Mammary epithelial cell (primary cell): ENCODE measurements at regions of chr15 and their contacts with region 1.

Region 1: DNA sequence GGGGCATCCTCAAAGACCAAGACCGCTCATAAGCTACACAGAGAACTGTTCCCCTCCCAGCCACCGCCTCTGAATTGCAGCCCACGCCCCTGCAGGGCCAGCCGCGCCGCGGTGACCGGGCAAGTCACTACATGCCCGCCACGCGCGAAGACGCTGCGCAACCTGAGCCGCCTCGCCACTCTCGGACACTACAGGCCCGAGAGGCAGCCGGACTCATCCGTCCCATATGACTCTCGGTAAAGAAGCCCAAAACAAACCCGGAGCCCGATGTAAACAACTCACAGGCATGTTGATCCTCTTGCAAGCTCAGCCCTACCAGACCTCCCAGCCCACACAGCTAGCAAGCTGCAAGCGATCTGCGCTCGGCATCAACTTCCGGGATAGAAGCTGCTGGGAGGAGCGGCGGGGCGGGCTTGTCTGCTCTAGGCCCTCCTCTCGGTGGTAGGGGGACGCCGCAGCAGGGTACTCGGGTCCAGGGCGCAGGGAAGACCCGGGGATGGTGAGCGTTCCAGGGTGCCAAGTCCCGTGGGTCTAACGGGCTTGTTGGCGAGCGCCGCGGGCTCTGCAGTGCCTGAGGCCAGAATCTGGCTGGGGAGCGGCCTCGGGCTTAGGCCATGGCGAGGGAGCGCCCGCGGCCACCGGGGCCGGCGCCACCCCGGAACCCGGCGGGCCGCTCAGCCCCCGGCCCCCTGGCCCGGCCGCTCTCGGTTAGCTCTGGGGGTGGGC is at the start of gene RPS27L:
- DNase-seq: peak; percentile 92
- H3K4me3 ChIP-seq: peak within 1 kb of the TSS; percentile 89 to 93 (median 91)
- H3K27ac ChIP-seq: peak within 1 kb of the TSS; percentile 95
- H3K4me1 ChIP-seq: peaks cover 3% of the 10 kb centered on the region
- H3K27me3 ChIP-seq: no peaks in the 10 kb centered on the region
- CTCF ChIP-seq: no peak
- total RNA-seq, gene RPS27L: 40.5 to 141 TPM

Region 2: GRCh38 chr15:63054985-63055384 is 102.3 kb before region 1 on chr15:
- CTCF ChIA-PET with region 1: no interaction called
- dilution Hi-C with region 1: no loop called
- in situ Hi-C with region 1: no loop called
- intact Hi-C with region 1: no loop called
- DNase-seq: no peak
- H3K4me3 ChIP-seq: no peak overlapping the region
- H3K27ac ChIP-seq: no peak overlapping the region
- H3K4me1 ChIP-seq: peaks cover 14% of the 10 kb centered on the region
- H3K27me3 ChIP-seq: no peaks in the 10 kb centered on the region
- CTCF ChIP-seq: no peak

Region 3: DNA sequence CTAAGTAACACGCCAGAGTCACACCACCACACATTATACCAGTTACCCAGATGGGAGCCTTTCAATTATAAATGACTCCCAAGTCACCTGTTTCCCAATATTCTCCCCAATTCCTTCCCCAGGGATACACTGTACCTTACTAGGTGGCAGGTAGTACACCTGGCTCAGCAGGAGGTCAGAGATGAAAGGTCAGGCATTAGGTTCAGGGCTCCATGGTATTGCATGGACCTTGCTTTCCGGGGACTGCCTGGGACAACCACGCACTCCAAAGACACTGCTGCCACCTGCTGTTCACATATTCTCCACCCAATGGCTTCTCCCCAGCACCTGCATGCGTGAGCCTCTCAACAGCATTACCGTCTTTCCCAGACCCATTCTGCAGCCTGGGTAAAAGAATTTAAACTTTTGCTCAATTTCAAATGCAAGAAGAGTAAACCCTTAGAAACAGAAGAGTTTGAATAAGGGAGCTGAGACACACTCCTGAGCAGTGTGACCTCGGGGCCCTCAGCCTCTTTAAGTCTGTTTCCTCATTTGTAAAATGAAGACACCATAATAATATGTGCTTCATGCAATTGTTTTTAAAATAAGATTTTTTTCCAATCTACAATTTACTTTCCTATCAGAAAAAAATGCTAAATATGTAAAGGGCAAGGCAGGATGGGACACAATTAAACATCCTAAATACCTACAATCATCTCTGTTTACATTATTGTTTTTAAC is 63.6 kb before region 1 on chr15:
- CTCF ChIA-PET with region 1: no interaction called
- dilution Hi-C with region 1: no loop called
- in situ Hi-C with region 1: no loop called
- intact Hi-C with region 1: loop called (anchors 2 kb)
- DNase-seq: peak; percentile 60
- H3K4me3 ChIP-seq: no peak overlapping the region
- H3K27ac ChIP-seq: no peak overlapping the region
- H3K4me1 ChIP-seq: peaks cover 9% of the 10 kb centered on the region
- H3K27me3 ChIP-seq: no peaks in the 10 kb centered on the region
- CTCF ChIP-seq: peak; percentile 77 to 96

Region 4: GRCh38 chr15:63135804-63136203 is 21.5 kb before region 1 on chr15:
- CTCF ChIA-PET with region 1: no interaction called
- dilution Hi-C with region 1: no loop called
- in situ Hi-C with region 1: no loop called
- intact Hi-C with region 1: loop called (anchors 2 kb)
- DNase-seq: peak; percentile 89
- H3K4me3 ChIP-seq: no peak overlapping the region
- H3K27ac ChIP-seq: peak overlapping the region; percentile 97
- H3K4me1 ChIP-seq: peaks cover 20% of the 10 kb centered on the region
- H3K27me3 ChIP-seq: no peaks in the 10 kb centered on the region
- CTCF ChIP-seq: no peak

Region 5: DNA sequence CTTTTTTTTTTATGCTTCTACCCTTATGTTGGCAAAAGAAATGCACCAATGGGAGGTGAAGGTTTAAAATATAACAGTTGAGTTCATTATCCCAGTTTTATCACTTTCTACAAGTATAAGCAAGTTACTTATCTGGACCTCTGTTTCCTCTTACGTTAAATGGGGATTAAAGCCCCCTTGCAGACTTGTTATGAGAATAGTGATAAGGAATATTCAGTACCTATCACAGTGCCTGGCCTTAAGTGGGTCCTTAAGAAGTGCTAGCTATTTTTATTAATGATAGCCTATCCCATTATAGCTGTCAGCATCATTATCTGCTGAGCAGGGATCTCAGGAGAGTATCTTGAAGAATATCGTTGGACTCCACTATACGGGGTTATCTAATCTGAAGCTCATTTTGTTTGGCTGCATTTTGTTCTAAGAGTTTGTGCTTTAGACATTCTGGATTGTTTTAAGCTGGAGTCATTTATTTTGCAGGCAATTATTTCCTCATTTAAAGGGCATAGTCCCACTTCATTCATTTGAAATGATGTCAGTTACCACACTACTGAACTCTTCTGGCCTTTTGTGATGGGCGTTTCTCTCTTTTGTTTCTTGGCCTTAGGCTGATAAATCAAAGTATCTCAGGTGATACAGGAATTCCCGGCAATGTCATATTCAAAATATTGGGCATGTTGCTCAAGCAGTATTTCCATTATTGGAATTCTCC is 61.0 kb after region 1 on chr15:
- CTCF ChIA-PET with region 1: no interaction called
- dilution Hi-C with region 1: no loop called
- in situ Hi-C with region 1: no loop called
- intact Hi-C with region 1: loop called (anchors 2 kb)
- DNase-seq: peak; percentile 94
- H3K4me3 ChIP-seq: no peak overlapping the region
- H3K27ac ChIP-seq: peak overlapping the region; percentile 64
- H3K4me1 ChIP-seq: peaks cover 28% of the 10 kb centered on the region
- H3K27me3 ChIP-seq: no peaks in the 10 kb centered on the region
- CTCF ChIP-seq: no peak

Region 6: DNA sequence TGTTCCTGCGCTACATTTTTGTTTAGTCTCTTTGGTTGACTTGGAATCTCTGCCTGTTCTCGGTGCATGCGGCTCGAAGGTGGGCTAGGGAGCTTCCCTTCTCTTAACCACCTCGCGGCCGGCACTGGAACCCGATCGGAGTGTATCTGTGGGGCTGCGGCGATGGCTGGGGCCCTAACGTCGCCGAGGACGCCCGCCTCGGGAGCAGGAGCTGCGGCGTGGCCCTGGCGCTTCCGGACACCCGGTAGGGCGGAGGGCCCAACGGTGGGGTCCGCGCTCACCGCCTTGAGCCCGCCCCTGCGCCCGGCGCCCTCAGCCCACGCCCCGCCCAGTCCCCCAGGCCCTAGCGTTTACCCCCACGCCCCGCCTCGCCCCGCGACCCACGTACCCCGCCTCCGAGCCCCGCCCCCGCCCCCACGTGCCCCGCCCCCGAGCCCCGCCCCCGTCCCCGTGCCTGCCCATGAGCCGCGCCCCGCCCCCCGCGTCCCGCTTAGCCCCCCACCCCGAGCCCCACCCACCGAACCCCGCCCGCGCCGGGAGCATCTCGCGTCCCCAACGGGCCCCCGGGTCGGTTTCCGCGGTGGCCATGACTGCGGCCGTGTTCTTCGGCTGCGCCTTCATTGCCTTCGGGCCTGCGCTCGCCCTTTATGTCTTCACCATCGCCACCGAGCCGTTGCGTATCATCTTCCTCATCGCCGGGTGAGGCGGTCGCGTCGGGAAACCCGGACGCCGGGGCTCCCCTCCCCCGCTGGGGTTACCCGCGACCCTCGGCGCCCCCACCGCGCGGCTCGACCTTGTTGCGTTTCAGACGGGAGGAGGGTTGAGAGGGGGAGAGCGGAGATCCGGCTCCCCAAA is 120.0 kb after region 1 on chr15 and contains the start of gene APH1B:
- CTCF ChIA-PET with region 1: no interaction called
- dilution Hi-C with region 1: no loop called
- in situ Hi-C with region 1: loop called in 1 of 2 experiments (anchors 10 kb)
- intact Hi-C with region 1: loop called (anchors 2 kb)
- DNase-seq: peak; percentile 56
- H3K4me3 ChIP-seq: peak within 1 kb of the TSS; percentile 84 to 97 (median 85)
- H3K27ac ChIP-seq: peak within 1 kb of the TSS; percentile 66
- H3K4me1 ChIP-seq: peaks cover 13% of the 10 kb centered on the region
- H3K27me3 ChIP-seq: no peaks in the 10 kb centered on the region
- CTCF ChIP-seq: peak in 1 of 2 donors; percentile 10
- total RNA-seq, gene APH1B: 15.8 to 18.4 TPM

Region 7: GRCh38 chr15:63402498-63403253 is 245.4 kb after region 1 on chr15:
- CTCF ChIA-PET with region 1: no interaction called
- dilution Hi-C with region 1: no loop called
- in situ Hi-C with region 1: loop called in 1 of 2 experiments (anchors 25 kb)
- intact Hi-C with region 1: loop called (anchors 2 kb)
- DNase-seq: peak; percentile 24
- H3K4me3 ChIP-seq: no peak overlapping the region
- H3K27ac ChIP-seq: no peak overlapping the region
- H3K4me1 ChIP-seq: peaks cover 10% of the 10 kb centered on the region
- H3K27me3 ChIP-seq: no peaks in the 10 kb centered on the region
- CTCF ChIP-seq: peak; percentile 60 to 62